Common myeloid progenitor, CD34-positive (primary cell): ENCODE measurements at regions of chr5 and their contacts with region 1.

Region 1: GRCh38 chr5:146965761-146966659 is 87.5 kb upstream of the PPP2R2B start:
- DNase-seq: peak; percentile 64 to 86 (median 82)
- H3K4me3 ChIP-seq: no peak overlapping the region
- H3K27ac ChIP-seq: no peak overlapping the region
- H3K4me1 ChIP-seq: no peaks in the 10 kb centered on the region
- H3K27me3 ChIP-seq: peaks cover 0 to 2% (median 0%) of the 10 kb centered on the region in 5 experiments

Region 2: DNA sequence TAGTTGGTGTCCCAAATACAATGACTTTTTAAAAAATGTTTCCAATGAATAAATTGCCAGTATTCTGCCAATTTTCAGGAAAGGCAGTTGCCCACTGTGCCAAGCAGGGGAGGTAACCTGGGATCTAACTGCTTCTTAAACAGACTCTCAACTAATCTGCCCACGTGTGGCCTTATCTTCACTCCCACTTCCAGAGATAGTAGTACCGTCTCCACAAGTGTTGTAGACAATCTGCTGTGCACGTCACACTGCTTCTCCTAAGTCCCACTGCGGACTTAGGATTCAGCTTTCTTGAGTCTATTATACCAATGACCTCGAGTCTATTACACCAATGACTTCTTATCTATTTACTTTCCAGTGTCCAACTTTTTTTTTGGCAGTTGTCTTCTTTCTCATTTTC is 606.2 kb before region 1 on chr5:
- CTCF ChIA-PET with region 1: no interaction called
- POLR2A ChIA-PET with region 1: no interaction called
- DNase-seq: no peak
- H3K4me3 ChIP-seq: no peak overlapping the region
- H3K27ac ChIP-seq: no peak overlapping the region
- H3K4me1 ChIP-seq: peaks cover 0 to 14% (median 9%) of the 10 kb centered on the region in 4 experiments
- H3K27me3 ChIP-seq: peaks cover 0 to 2% (median 0%) of the 10 kb centered on the region in 5 experiments

Region 3: DNA sequence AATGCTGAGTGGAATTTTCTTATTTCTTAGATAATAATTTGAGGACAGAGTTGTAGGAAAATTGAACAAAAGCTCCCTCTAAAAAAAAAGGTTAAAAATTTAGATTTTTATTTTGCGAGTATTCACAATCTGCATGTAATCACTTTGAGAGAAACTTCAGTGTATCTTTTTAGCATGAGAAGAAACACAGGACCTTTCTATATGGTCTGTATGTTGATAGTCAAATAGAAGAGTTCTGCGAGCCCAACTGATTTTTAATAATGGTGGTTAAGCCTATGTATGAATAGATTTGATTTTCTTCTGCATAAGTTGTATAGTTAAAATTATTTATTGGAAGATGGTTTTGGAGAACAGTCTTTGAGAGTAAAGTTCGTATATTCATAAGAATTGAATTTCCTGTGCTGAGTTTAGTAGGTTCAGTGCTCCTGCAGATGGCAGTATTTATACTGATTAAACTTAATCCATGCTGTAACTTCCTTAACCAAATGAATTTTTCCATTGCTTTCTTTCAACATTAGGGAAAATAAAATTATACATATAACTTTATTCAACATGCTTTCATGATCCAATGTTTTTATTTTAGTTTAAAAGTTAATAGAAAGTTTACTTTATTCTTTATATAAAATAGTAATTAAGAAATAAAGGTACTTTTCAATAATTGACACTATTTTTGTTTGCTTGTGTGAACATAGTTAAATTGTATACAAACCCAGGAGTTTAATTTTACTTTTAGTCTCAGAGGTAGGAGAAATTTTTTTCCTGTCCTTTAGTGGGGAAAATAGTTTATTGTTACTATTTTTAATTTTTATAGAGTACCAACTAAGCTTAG is 499.3 kb before region 1 on chr5:
- CTCF ChIA-PET with region 1: no interaction called
- POLR2A ChIA-PET with region 1: no interaction called
- DNase-seq: peak in 2 of 3 donors; percentile 24
- H3K4me3 ChIP-seq: no peak overlapping the region
- H3K27ac ChIP-seq: peak overlapping the region in 1 of 2 experiments; percentile 56
- H3K4me1 ChIP-seq: no peaks in the 10 kb centered on the region
- H3K27me3 ChIP-seq: no peaks in the 10 kb centered on the region

Region 4: DNA sequence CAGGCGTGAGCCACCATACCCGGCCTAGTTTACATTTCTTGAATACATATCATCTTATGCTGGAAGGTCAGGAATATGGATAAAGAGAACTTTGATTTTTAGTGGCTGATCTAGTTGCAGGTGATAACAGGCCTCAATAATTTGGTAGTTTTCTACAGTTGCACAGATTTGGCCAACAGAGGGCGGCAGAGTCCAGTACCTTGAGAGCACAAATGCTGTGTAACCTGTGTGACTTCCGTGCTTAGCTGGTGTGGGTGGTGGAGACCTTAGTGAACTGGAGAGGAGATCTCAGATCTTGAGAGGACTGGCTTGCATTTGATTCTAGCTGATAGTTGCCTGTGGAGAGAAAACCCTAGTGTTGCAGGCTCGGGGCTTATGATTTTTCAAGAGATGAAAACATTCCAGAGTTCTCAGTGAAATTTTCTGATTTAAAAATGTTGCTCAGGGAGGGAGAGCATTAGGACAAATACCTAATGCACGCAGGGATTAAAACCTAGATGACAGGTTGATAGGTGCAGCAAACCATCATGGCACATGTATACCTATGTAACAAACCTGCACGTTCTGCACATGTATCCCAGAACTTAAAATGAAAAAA is 432.7 kb before region 1 on chr5:
- CTCF ChIA-PET with region 1: interaction called, 105 read pairs
- POLR2A ChIA-PET with region 1: interaction called, 3 read pairs
- DNase-seq: peak; percentile 59 to 83 (median 77)
- H3K4me3 ChIP-seq: no peak overlapping the region
- H3K27ac ChIP-seq: no peak overlapping the region
- H3K4me1 ChIP-seq: no peaks in the 10 kb centered on the region
- H3K27me3 ChIP-seq: no peaks in the 10 kb centered on the region

Region 5: GRCh38 chr5:146541958-146542849 is 423.8 kb before region 1 on chr5:
- CTCF ChIA-PET with region 1: interaction called, 105 read pairs
- POLR2A ChIA-PET with region 1: interaction called, 3 read pairs
- DNase-seq: peak; percentile 57 to 73 (median 69)
- H3K4me3 ChIP-seq: no peak overlapping the region
- H3K27ac ChIP-seq: no peak overlapping the region
- H3K4me1 ChIP-seq: no peaks in the 10 kb centered on the region
- H3K27me3 ChIP-seq: peaks cover 0 to 2% (median 0%) of the 10 kb centered on the region in 5 experiments

Region 6: DNA sequence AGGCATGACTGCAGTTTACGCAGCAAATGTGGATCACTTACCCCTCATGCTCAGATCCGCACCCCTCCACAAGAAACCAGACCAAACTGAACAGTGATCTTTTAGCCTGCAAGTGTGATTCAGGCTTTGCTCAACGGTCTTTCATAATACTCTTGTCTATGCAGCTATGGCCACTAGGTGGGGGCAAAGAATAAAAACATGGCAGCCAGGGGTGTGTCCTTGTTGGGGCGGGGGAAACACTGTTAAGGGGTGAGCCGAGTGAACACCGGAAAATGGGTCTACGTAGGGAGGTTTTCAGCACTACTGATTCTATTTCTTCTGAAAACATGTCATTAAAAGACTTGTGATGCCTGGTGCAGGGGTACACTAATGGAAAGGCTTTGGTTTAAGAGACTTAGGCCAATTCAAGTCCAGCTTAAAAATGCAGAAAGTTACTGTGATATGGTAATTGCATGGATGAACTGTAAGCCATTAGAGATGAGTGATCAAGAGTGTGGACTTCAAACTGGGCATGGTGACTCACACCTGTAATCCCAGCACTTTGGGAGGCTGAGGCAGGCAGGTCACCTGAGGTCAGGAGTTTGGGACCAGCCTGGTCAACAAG is 400.1 kb before region 1 on chr5:
- CTCF ChIA-PET with region 1: interaction called, 18 read pairs
- POLR2A ChIA-PET with region 1: no interaction called
- DNase-seq: peak; percentile 53 to 78 (median 76)
- H3K4me3 ChIP-seq: peak overlapping the region in 1 of 7 experiments; percentile 17
- H3K27ac ChIP-seq: no peak overlapping the region
- H3K4me1 ChIP-seq: no peaks in the 10 kb centered on the region
- H3K27me3 ChIP-seq: peaks cover 0 to 1% (median 0%) of the 10 kb centered on the region in 5 experiments

Region 7: GRCh38 chr5:146662229-146662628 is 303.8 kb before region 1 on chr5:
- CTCF ChIA-PET with region 1: interaction called, 127 read pairs
- POLR2A ChIA-PET with region 1: no interaction called
- DNase-seq: peak; percentile 31 to 63 (median 62)
- H3K4me3 ChIP-seq: no peak overlapping the region
- H3K27ac ChIP-seq: no peak overlapping the region
- H3K4me1 ChIP-seq: no peaks in the 10 kb centered on the region
- H3K27me3 ChIP-seq: peaks cover 0 to 2% (median 0%) of the 10 kb centered on the region in 5 experiments

Region 8: GRCh38 chr5:147055850-147056566 is 90.0 kb after region 1 on chr5:
- CTCF ChIA-PET with region 1: no interaction called
- POLR2A ChIA-PET with region 1: no interaction called
- DNase-seq: no peak
- H3K4me3 ChIP-seq: no peak overlapping the region
- H3K27ac ChIP-seq: no peak overlapping the region
- H3K4me1 ChIP-seq: no peaks in the 10 kb centered on the region
- H3K27me3 ChIP-seq: peaks cover 2 to 5% (median 3%) of the 10 kb centered on the region in 5 experiments

Region 9: GRCh38 chr5:147160902-147161700 is 195.1 kb after region 1 on chr5:
- CTCF ChIA-PET with region 1: no interaction called
- POLR2A ChIA-PET with region 1: no interaction called
- DNase-seq: no peak
- H3K4me3 ChIP-seq: no peak overlapping the region
- H3K27ac ChIP-seq: no peak overlapping the region
- H3K4me1 ChIP-seq: no peaks in the 10 kb centered on the region
- H3K27me3 ChIP-seq: peaks cover 0 to 5% (median 0%) of the 10 kb centered on the region in 5 experiments